PC-9 (cell line): ENCODE measurements at regions of chr12 and their contacts with region 1.

Region 1: DNA sequence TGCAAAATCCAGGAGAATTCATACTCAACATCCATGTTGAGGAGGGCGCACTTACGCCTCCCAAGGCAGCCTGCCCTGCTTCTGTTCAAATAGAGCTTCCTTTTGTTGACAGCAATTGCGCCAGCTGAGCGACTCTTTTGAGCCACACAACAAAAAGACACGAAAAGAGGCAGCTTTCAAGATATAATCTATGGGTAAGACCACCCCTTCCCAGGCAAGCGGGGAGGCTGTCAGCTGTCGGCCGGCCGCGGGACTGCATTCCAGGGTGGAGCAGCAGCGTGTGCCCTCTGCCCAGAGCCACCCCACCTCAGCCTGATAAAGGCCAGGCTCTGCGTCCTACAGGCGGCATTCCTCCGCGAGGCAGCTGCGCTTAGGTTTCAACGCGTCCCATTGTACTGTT is 15.8 kb upstream of the STAB2 start:
- DNase-seq: peak in 1 of 2 experiments; percentile 17
- H3K4me3 ChIP-seq: no peak overlapping the region
- H3K27ac ChIP-seq: no peak overlapping the region
- H3K4me1 ChIP-seq: peaks cover 4% of the 10 kb centered on the region; the same call in 1 of the 2 replicates
- H3K27me3 ChIP-seq: peaks cover 25% of the 10 kb centered on the region; the same call in 1 of the 2 replicates
- CTCF ChIP-seq: no peak

Region 2: DNA sequence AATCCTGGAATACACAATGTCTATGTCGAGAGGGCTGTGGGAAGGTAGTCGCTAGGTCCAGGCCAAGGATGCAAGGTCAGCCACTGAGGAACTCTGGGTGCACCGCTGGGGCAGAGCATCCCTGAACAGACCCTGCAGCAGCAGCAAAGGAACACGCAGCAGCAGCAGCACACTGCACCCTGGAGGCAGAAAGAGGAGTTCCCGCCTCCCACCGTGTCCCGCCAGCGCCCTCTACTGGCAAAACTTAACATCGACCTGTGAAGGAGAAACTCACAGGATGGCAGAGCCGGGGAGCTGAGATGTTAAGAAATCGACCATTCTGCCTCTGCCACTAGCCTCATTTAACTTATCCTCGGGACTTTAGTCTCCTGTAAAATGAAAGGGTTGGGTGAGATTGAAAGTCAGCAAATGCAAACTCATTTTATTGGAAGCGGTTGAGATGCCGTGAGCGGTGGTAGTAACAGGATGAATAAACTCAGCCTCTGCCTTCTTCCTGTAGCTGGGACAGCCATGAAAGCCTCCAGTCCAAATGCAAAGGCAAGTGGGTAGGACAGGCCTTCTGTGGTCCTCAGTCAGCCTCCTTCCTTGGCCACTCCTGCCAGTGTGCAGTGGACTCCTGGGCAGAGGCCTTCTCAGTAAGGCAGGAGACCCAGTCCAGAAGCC is 61.4 kb after region 1 on chr12:
- CTCF ChIA-PET with region 1: no interaction called
- POLR2A ChIA-PET with region 1: no interaction called
- intact Hi-C with region 1: loop called (anchors 1 kb)
- DNase-seq: peak; percentile 38 to 73
- H3K4me3 ChIP-seq: no peak overlapping the region
- H3K27ac ChIP-seq: no peak overlapping the region
- H3K4me1 ChIP-seq: no peaks in the 10 kb centered on the region
- H3K27me3 ChIP-seq: peaks cover 18% of the 10 kb centered on the region
- CTCF ChIP-seq: peak; percentile 93